ENCODE measurements at regions of chr14 and their contacts with region 1.

Region 1: GRCh38 chr14:91060351-91061055 is at the start of gene RPS6KA5:
- DNase-seq: peak; percentile 92 to 98 (median 94)
- ATAC-seq: peak; percentile 96
- H3K4me3 ChIP-seq: peak within 1 kb of the TSS; percentile 59
- H3K27ac ChIP-seq: peak within 1 kb of the TSS; percentile 87
- H3K4me1 ChIP-seq: peaks cover 8% of the 10 kb centered on the region in 2 experiments; a peak in 3 of 5 replicates
- H3K27me3 ChIP-seq: no peaks in the 10 kb centered on the region
- CTCF ChIP-seq: no peak
- EP300 ChIP-seq: no peak; the same call in 1 of the 2 replicates
- POLR2A ChIP-seq: peak; percentile 72
- RAD21 ChIP-seq: peak in 1 of 2 experiments; percentile 6; a peak in 2 of 4 replicates
- polyA plus RNA-seq, gene RPS6KA5: 0.88 to 0.96 TPM

Region 2: GRCh38 chr14:91019673-91020072 is 40.8 kb before region 1 on chr14:
- CTCF ChIA-PET with region 1: no interaction called
- POLR2A ChIA-PET with region 1: no interaction called
- in situ Hi-C with region 1: no loop called
- intact Hi-C with region 1: no loop called
- DNase-seq: no peak
- ATAC-seq: no peak
- H3K4me3 ChIP-seq: no peak overlapping the region
- H3K27ac ChIP-seq: no peak overlapping the region
- H3K4me1 ChIP-seq: no peaks in the 10 kb centered on the region; a peak in 1 of 5 replicates
- H3K27me3 ChIP-seq: no peaks in the 10 kb centered on the region
- CTCF ChIP-seq: no peak
- EP300 ChIP-seq: no peak
- POLR2A ChIP-seq: no peak
- RAD21 ChIP-seq: no peak

Region 3: GRCh38 chr14:91114079-91115065 is 53.9 kb after region 1 on chr14:
- CTCF ChIA-PET with region 1: no interaction called
- POLR2A ChIA-PET with region 1: interaction called, 13 read pairs
- in situ Hi-C with region 1: no loop called
- intact Hi-C with region 1: loop called (anchors 2 kb)
- DNase-seq: peak; percentile 74 to 79 (median 78)
- ATAC-seq: peak; percentile 93
- H3K4me3 ChIP-seq: peak overlapping the region; percentile 47
- H3K27ac ChIP-seq: peak overlapping the region; percentile 90
- H3K4me1 ChIP-seq: peaks cover 14 to 32% of the 10 kb centered on the region in 2 experiments
- H3K27me3 ChIP-seq: no peaks in the 10 kb centered on the region
- CTCF ChIP-seq: no peak
- EP300 ChIP-seq: no peak
- POLR2A ChIP-seq: peak; percentile 77
- RAD21 ChIP-seq: no peak

Region 4: GRCh38 chr14:91138511-91139359 is 78.2 kb after region 1 on chr14:
- CTCF ChIA-PET with region 1: no interaction called
- POLR2A ChIA-PET with region 1: no interaction called
- in situ Hi-C with region 1: no loop called
- intact Hi-C with region 1: loop called (anchors 2 kb)
- DNase-seq: peak; percentile 34 to 73 (median 51)
- ATAC-seq: peak; percentile 89
- H3K4me3 ChIP-seq: no peak overlapping the region
- H3K27ac ChIP-seq: peak overlapping the region; percentile 6; the same call in 1 of the 3 replicates
- H3K4me1 ChIP-seq: peaks cover 0 to 20% of the 10 kb centered on the region in 2 experiments; a peak in 3 of 5 replicates
- H3K27me3 ChIP-seq: no peaks in the 10 kb centered on the region
- CTCF ChIP-seq: peak; percentile 68 to 75 (median 71)
- EP300 ChIP-seq: no peak
- POLR2A ChIP-seq: no peak
- RAD21 ChIP-seq: peak; percentile 34 to 62